ENCODE measurements at regions of chr12 and their contacts with region 1.

Region 1: GRCh38 chr12:62192180-62192902 is 67.9 kb upstream of the USP15 start:
- DNase-seq: peak; percentile 75
- H3K4me3 ChIP-seq: peak overlapping the region; percentile 40 to 52 (median 52)
- H3K27ac ChIP-seq: peak overlapping the region; percentile 60
- H3K4me1 ChIP-seq: peaks cover 44% of the 10 kb centered on the region
- H3K27me3 ChIP-seq: peaks cover 13% of the 10 kb centered on the region
- CTCF ChIP-seq: peak; percentile 61 to 74

Region 2: DNA sequence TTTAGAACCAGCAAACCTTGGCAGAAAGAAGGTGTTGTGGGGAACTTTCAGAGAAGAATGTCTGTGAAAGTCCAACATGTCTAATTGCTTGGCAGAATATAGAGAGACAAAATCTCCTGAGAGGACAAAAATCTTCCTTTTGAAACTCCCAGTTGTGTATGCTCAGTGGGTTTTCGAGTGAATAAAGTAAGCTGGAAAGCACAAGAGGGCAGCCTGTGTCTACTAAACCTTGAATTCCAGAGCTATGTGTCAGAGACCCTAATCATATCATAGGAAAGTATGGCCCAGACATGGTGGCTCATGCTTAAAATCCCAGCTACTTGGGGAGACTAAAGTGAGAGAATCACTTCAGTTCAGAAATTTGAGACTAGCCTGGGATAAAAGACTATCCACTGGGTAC is 1935.3 kb before region 1 on chr12:
- CTCF ChIA-PET with region 1: no interaction called
- dilution Hi-C with region 1: no loop called
- in situ Hi-C with region 1: no loop called
- intact Hi-C with region 1: loop called (anchors 5 kb)
- DNase-seq: peak; percentile 43
- H3K4me3 ChIP-seq: no peak overlapping the region
- H3K27ac ChIP-seq: no peak overlapping the region
- H3K4me1 ChIP-seq: no peaks in the 10 kb centered on the region
- H3K27me3 ChIP-seq: no peaks in the 10 kb centered on the region
- CTCF ChIP-seq: peak; percentile 21 to 30

Region 3: GRCh38 chr12:60684988-60685655 is 1507.2 kb before region 1 on chr12:
- CTCF ChIA-PET with region 1: no interaction called
- dilution Hi-C with region 1: no loop called
- in situ Hi-C with region 1: loop called in 1 of 2 experiments (anchors 25 kb)
- intact Hi-C with region 1: loop called (anchors 2 kb)
- DNase-seq: no peak
- H3K4me3 ChIP-seq: no peak overlapping the region
- H3K27ac ChIP-seq: no peak overlapping the region
- H3K4me1 ChIP-seq: no peaks in the 10 kb centered on the region
- H3K27me3 ChIP-seq: no peaks in the 10 kb centered on the region
- CTCF ChIP-seq: peak; percentile 40 to 65

Region 4: GRCh38 chr12:61654698-61655097 is 537.6 kb before region 1 on chr12:
- CTCF ChIA-PET with region 1: no interaction called
- dilution Hi-C with region 1: no loop called
- in situ Hi-C with region 1: no loop called
- intact Hi-C with region 1: loop called (anchors 1 kb)
- DNase-seq: peak; percentile 17
- H3K4me3 ChIP-seq: no peak overlapping the region
- H3K27ac ChIP-seq: no peak overlapping the region
- H3K4me1 ChIP-seq: no peaks in the 10 kb centered on the region
- H3K27me3 ChIP-seq: no peaks in the 10 kb centered on the region
- CTCF ChIP-seq: peak; percentile 15 to 38

Region 5: GRCh38 chr12:62123721-62124203 is 68.6 kb before region 1 on chr12:
- CTCF ChIA-PET with region 1: no interaction called
- dilution Hi-C with region 1: no loop called
- in situ Hi-C with region 1: no loop called
- intact Hi-C with region 1: loop called (anchors 1 kb)
- DNase-seq: peak; percentile 38
- H3K4me3 ChIP-seq: no peak overlapping the region
- H3K27ac ChIP-seq: no peak overlapping the region
- H3K4me1 ChIP-seq: peaks cover 13% of the 10 kb centered on the region
- H3K27me3 ChIP-seq: peaks cover 2% of the 10 kb centered on the region
- CTCF ChIP-seq: peak; percentile 80 to 83

Region 6: GRCh38 chr12:62259993-62260732 is 67.8 kb after region 1 on chr12 and contains the start of gene USP15:
- CTCF ChIA-PET with region 1: no interaction called
- dilution Hi-C with region 1: no loop called
- in situ Hi-C with region 1: no loop called
- intact Hi-C with region 1: loop called (anchors 1 kb)
- DNase-seq: peak; percentile 96
- H3K4me3 ChIP-seq: peak within 1 kb of the TSS; percentile 74 to 100 (median 98)
- H3K27ac ChIP-seq: peak within 1 kb of the TSS; percentile 89
- H3K4me1 ChIP-seq: peaks cover 24% of the 10 kb centered on the region
- H3K27me3 ChIP-seq: no peaks in the 10 kb centered on the region
- CTCF ChIP-seq: peak; percentile 50 to 61
- total RNA-seq, gene USP15: 59.2 to 62.0 TPM

Region 7: GRCh38 chr12:62292761-62293344 is 100.5 kb after region 1 on chr12:
- CTCF ChIA-PET with region 1: no interaction called
- dilution Hi-C with region 1: no loop called
- in situ Hi-C with region 1: no loop called
- intact Hi-C with region 1: no loop called
- DNase-seq: no peak
- H3K4me3 ChIP-seq: no peak overlapping the region
- H3K27ac ChIP-seq: no peak overlapping the region
- H3K4me1 ChIP-seq: peaks cover 12% of the 10 kb centered on the region
- H3K27me3 ChIP-seq: no peaks in the 10 kb centered on the region
- CTCF ChIP-seq: no peak

Measured in mammary epithelial cell (primary cell).